Endothelial cell of umbilical vein (primary cell): ENCODE measurements at regions of chr2 and their contacts with region 1.

Region 1: DNA sequence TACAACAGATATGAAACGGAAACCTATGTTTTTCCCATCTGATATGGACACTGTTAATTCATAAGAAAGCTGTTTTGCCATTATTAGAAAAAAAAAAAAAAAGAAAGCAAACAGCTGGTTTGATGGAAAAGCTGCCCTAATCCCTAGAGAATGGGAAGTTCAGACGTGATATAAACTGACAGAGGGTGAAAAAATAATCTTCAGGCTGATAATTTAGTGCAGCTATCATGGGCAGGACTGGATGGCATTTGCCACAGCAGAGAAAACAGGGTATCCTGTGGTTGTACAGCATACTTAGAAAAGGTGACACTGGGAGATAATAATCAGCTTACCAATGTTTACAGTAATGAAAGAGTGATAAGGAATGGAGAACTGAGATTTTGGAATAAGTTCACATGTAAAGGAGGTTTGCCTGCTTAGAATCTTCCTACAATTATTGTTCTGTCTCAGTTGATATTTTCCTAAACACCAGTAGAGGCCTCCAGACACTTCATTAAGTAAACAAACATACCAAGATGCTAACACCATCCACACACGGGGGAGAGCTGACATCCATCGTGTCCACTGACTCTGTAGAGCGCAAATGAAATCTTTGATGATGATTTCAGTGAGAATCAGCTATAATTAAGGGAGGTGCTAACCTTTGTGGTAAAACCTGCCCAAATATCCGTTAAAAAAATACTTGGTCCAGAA is 211.6 kb upstream of the MMADHC start:
- DNase-seq: peak; percentile 52
- H3K4me3 ChIP-seq: no peak overlapping the region
- H3K27ac ChIP-seq: no peak overlapping the region
- H3K4me1 ChIP-seq: peaks cover 6% of the 10 kb centered on the region
- H3K27me3 ChIP-seq: no peaks in the 10 kb centered on the region
- CTCF ChIP-seq: peak; percentile 15 to 34
- POLR2A ChIP-seq: no peak

Region 2: DNA sequence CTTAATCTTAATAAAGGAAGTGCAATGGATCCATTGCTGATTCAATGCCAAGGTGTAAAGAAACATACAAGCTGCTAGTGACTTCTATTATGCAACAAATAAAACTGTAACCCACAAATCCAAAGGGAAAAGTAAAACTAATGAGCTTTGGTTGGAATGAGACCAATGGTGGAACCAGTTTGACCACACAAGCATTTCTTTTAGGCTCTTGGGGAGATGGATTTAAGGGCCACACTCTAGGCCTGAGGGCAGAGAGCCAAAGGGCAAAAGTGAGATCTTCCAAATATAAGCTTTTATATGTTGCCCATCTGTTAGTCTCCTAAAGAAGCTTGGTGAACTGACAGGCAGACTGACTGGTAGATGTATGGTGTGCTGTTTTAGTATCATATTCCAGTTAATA is 170.1 kb before region 1 on chr2:
- CTCF ChIA-PET with region 1: no interaction called
- POLR2A ChIA-PET with region 1: no interaction called
- dilution Hi-C with region 1: no loop called
- intact Hi-C with region 1: no loop called
- DNase-seq: no peak
- H3K4me3 ChIP-seq: no peak overlapping the region
- H3K27ac ChIP-seq: no peak overlapping the region
- H3K4me1 ChIP-seq: no peaks in the 10 kb centered on the region
- H3K27me3 ChIP-seq: no peaks in the 10 kb centered on the region
- CTCF ChIP-seq: no peak
- POLR2A ChIP-seq: no peak

Region 3: GRCh38 chr2:149787206-149787605 is 12.0 kb before region 1 on chr2:
- CTCF ChIA-PET with region 1: no interaction called
- POLR2A ChIA-PET with region 1: no interaction called
- dilution Hi-C with region 1: no loop called
- intact Hi-C with region 1: no loop called
- DNase-seq: no peak
- H3K4me3 ChIP-seq: no peak overlapping the region
- H3K27ac ChIP-seq: no peak overlapping the region
- H3K4me1 ChIP-seq: no peaks in the 10 kb centered on the region
- H3K27me3 ChIP-seq: no peaks in the 10 kb centered on the region
- CTCF ChIP-seq: no peak
- POLR2A ChIP-seq: no peak

Region 4: DNA sequence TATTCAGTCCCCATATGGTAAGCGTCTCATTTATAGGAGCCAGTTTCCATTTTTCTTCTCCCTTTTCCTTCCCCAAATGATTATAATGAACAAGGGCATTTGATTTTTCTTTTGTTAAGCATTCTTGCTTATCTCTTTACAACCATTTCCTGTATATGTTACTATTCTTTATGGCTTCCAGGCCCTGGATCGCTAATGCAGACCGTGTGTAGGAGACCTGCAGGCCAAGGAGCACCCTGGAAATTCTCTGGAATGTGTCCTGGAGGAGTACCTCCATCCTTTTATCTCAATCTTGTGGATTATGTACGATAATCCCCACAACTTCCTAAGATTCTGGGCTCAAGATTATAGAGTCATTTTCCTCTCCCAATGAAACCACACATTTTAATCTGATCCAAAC is 228.0 kb after region 1 on chr2:
- CTCF ChIA-PET with region 1: no interaction called
- POLR2A ChIA-PET with region 1: no interaction called
- dilution Hi-C with region 1: no loop called
- intact Hi-C with region 1: loop called (anchors 2 kb)
- DNase-seq: peak; percentile 82
- H3K4me3 ChIP-seq: no peak overlapping the region
- H3K27ac ChIP-seq: peak overlapping the region; percentile 28
- H3K4me1 ChIP-seq: peaks cover 21% of the 10 kb centered on the region
- H3K27me3 ChIP-seq: no peaks in the 10 kb centered on the region
- CTCF ChIP-seq: no peak
- POLR2A ChIP-seq: no peak

Region 5: DNA sequence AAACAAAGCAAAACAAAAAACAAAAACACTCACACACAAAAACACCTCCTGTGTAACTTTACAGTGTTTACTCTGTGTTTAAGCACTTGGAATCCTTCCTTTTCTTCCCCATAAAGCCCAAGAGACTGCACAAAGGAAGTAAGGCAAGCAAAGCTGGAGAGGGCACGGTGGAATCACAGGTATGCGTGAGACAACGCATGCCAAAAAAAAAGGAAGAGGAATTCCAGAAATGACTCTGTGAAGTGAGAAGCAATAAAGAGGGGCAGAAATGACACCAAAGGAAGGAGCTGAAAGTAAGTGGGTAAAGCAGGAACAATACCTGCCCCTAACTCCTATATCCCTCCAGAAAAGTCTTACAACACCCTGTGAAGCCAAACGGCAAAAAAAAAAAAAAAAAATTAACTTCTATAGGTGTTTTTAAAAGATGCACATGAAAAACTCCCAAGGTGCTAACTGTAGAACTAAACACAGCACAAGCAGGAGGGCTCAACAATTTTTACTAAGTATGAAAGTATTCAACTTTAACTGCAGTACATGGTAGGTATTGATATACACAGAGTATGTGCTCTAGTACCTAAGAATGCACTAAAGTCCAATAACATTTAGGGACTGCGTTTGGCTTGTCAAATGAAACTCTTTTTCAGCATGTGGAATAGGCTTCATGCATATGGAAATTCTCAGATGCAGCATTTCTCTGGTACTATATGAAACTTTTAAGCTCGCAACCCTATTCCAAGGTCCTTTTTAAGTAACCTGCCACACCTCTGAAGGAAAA is 679.2 kb after region 1 on chr2:
- CTCF ChIA-PET with region 1: interaction called, 11 read pairs
- POLR2A ChIA-PET with region 1: interaction called, 3 read pairs
- dilution Hi-C with region 1: no loop called
- intact Hi-C with region 1: no loop called
- DNase-seq: peak; percentile 37
- H3K4me3 ChIP-seq: peak overlapping the region in 2 of 3 experiments; percentile 6 to 46
- H3K27ac ChIP-seq: peak overlapping the region; percentile 83
- H3K4me1 ChIP-seq: peaks cover 97% of the 10 kb centered on the region
- H3K27me3 ChIP-seq: no peaks in the 10 kb centered on the region
- CTCF ChIP-seq: no peak
- POLR2A ChIP-seq: peak; percentile 68

Region 6: DNA sequence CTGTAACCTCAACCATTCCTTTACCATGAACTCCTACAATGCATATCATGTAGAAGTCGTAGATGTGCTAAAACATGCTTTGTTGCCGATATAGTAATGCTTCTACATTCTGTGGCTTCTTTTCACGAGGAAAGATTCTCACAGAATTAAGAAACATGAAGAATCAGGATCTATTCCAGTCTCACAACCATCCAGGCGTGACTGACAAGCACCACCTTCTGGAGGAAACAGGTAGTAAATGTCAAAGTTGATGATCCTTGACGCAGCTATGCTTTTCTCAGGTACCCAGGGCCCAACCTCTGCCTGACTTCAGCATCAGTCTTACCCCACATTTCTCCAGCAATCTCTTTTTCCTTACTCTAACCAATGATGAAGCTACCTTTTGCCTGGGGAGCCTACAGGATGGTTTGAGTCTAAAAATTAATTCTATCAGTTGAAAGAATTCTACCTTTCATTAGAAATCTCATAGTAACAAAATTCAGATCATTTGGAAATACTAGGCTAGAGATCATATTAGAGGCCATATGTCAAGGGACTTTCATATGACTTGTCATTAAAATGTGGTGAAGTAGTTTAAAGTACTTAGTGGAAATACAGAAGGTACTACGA is 811.6 kb after region 1 on chr2:
- CTCF ChIA-PET with region 1: interaction called, 3 read pairs
- POLR2A ChIA-PET with region 1: no interaction called
- dilution Hi-C with region 1: no loop called
- intact Hi-C with region 1: loop called (anchors 1 kb)
- DNase-seq: peak; percentile 45
- H3K4me3 ChIP-seq: no peak overlapping the region
- H3K27ac ChIP-seq: no peak overlapping the region
- H3K4me1 ChIP-seq: peaks cover 8% of the 10 kb centered on the region
- H3K27me3 ChIP-seq: no peaks in the 10 kb centered on the region
- CTCF ChIP-seq: peak; percentile 31 to 34
- POLR2A ChIP-seq: no peak